CD4-positive, alpha-beta memory T cell (primary cell): ENCODE measurements at regions of chr15 and their contacts with region 1.

Region 1: GRCh38 chr15:63945007-63945788 is 101.1 kb downstream of the DAPK2 start:
- DNase-seq: peak; percentile 50 to 66 (median 56)
- H3K4me3 ChIP-seq: no peak overlapping the region
- H3K4me3 Mint-ChIP-seq: peak overlapping the region in 3 of 8 donors; percentile 4 to 57 (median 14)
- H3K27ac ChIP-seq: no peak overlapping the region
- H3K27ac Mint-ChIP-seq: peak overlapping the region in 5 of 7 donors; percentile 30 to 85 (median 61)
- H3K4me1 ChIP-seq: peaks cover 9% of the 10 kb centered on the region
- H3K4me1 Mint-ChIP-seq: peaks cover 6 to 20% (median 10%) of the 10 kb centered on the region in 4 donors
- H3K27me3 ChIP-seq: no peaks in the 10 kb centered on the region
- H3K27me3 Mint-ChIP-seq: no peaks in the 10 kb centered on the region

Region 2: GRCh38 chr15:63600616-63601025 is 344.6 kb before region 1 on chr15:
- CTCF ChIA-PET with region 1: no interaction called
- POLR2A ChIA-PET with region 1: no interaction called
- intact Hi-C with region 1: no loop called
- DNase-seq: peak; percentile 90 to 95 (median 93)
- H3K4me3 ChIP-seq: peak overlapping the region; percentile 19 to 70
- H3K4me3 Mint-ChIP-seq: peak overlapping the region; percentile 92 to 98 (median 95)
- H3K27ac ChIP-seq: peak overlapping the region; percentile 69
- H3K27ac Mint-ChIP-seq: peak overlapping the region; percentile 94 to 97 (median 96)
- H3K4me1 ChIP-seq: peaks cover 39% of the 10 kb centered on the region
- H3K4me1 Mint-ChIP-seq: peaks cover 26 to 84% (median 47%) of the 10 kb centered on the region in 4 donors
- H3K27me3 ChIP-seq: no peaks in the 10 kb centered on the region
- H3K27me3 Mint-ChIP-seq: no peaks in the 10 kb centered on the region

Region 3: DNA sequence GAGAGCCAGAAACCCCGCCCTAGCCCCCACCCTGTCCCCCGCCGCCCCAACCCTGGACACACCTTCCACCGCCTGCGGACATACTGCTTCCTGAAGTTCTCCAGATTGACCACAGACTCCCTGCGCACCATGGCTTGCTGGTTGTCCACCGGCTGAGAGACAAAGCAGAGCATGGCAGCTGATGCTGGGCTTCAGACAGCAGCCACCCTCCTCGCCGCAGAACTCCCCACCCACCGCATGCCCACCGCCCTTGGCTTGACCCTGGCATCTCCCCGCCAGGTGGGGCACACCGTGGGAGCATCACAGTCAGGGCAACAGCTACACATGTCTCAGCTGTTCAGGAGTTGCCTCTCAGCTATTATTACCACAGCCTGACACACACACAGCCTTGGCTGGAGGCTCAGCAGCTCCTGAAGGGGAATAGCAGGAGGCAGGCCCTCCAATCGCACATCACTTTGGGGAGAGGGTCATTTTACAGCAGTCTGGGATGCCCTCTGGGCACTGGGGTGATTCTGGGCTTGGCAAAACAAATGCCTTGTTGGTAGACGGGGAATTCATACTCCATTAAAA is 33.1 kb before region 1 on chr15:
- CTCF ChIA-PET with region 1: interaction called, 10 read pairs
- POLR2A ChIA-PET with region 1: interaction called, 3 read pairs
- intact Hi-C with region 1: no loop called
- DNase-seq: no peak
- H3K4me3 ChIP-seq: no peak overlapping the region
- H3K4me3 Mint-ChIP-seq: no peak overlapping the region
- H3K27ac ChIP-seq: no peak overlapping the region
- H3K27ac Mint-ChIP-seq: no peak overlapping the region
- H3K4me1 ChIP-seq: peaks cover under 1% of the 10 kb centered on the region
- H3K4me1 Mint-ChIP-seq: peaks cover 0 to 1% (median under 1%) of the 10 kb centered on the region in 4 donors
- H3K27me3 ChIP-seq: no peaks in the 10 kb centered on the region
- H3K27me3 Mint-ChIP-seq: no peaks in the 10 kb centered on the region

Region 4: GRCh38 chr15:63933522-63933921 is 11.7 kb before region 1 on chr15:
- CTCF ChIA-PET with region 1: interaction called, 20 read pairs
- POLR2A ChIA-PET with region 1: no interaction called
- intact Hi-C with region 1: no loop called
- DNase-seq: no peak
- H3K4me3 ChIP-seq: no peak overlapping the region
- H3K4me3 Mint-ChIP-seq: no peak overlapping the region
- H3K27ac ChIP-seq: no peak overlapping the region
- H3K27ac Mint-ChIP-seq: no peak overlapping the region
- H3K4me1 ChIP-seq: peaks cover 15% of the 10 kb centered on the region
- H3K4me1 Mint-ChIP-seq: peaks cover 11 to 22% (median 14%) of the 10 kb centered on the region in 4 donors
- H3K27me3 ChIP-seq: no peaks in the 10 kb centered on the region
- H3K27me3 Mint-ChIP-seq: no peaks in the 10 kb centered on the region

Region 5: GRCh38 chr15:63970621-63971426 is 25.6 kb after region 1 on chr15:
- CTCF ChIA-PET with region 1: interaction called, 26 read pairs
- POLR2A ChIA-PET with region 1: interaction called, 7 read pairs
- intact Hi-C with region 1: no loop called
- DNase-seq: peak; percentile 7 to 58 (median 19)
- H3K4me3 ChIP-seq: peak overlapping the region in 1 of 2 donors; percentile 4
- H3K4me3 Mint-ChIP-seq: peak overlapping the region; percentile 8 to 91 (median 78)
- H3K27ac ChIP-seq: peak overlapping the region; percentile 34
- H3K27ac Mint-ChIP-seq: peak overlapping the region; percentile 84 to 99 (median 95)
- H3K4me1 ChIP-seq: peaks cover 37% of the 10 kb centered on the region
- H3K4me1 Mint-ChIP-seq: peaks cover 22 to 50% (median 33%) of the 10 kb centered on the region in 4 donors
- H3K27me3 ChIP-seq: no peaks in the 10 kb centered on the region
- H3K27me3 Mint-ChIP-seq: no peaks in the 10 kb centered on the region

Region 6: DNA sequence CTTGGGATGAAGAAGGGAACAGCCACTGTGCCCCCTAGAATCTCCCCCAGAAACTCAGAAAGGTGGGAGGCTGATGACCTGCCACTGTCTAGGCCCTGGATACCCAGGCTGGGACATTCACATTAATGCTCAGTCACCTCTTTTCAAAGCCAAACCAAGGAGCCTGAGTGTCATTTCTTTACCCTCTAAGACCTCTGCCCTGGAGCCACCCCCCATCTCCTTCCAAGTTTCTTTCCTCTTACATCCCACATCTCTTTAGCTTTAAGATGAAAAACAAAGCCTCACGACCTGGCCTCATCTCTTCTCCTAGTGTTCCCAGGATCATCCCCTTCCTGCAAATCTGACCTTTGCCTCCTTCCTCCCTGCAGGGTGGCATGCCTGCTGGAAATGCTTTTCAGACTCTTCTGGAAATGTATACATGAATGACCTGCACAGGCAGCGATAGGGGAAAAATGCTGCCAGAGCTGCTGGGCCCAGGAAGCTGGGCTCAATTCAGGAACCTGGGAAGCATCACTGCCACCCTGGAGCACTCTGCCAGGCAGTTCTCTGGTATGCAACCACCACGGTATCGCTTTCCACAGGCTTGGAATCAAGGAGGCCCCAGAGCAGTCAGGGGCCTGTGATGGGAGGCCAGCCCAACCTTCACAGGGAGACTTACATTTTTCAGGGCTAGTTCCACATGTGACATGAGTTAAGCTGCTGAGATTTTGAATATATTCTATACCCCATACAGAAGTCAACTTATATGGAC is 33.5 kb after region 1 on chr15:
- CTCF ChIA-PET with region 1: interaction called, 12 read pairs
- POLR2A ChIA-PET with region 1: no interaction called
- intact Hi-C with region 1: no loop called
- DNase-seq: no peak
- H3K4me3 ChIP-seq: no peak overlapping the region
- H3K4me3 Mint-ChIP-seq: no peak overlapping the region
- H3K27ac ChIP-seq: no peak overlapping the region
- H3K27ac Mint-ChIP-seq: peak overlapping the region in 1 of 7 donors; percentile 37
- H3K4me1 ChIP-seq: no peaks in the 10 kb centered on the region
- H3K4me1 Mint-ChIP-seq: no peaks in the 10 kb centered on the region
- H3K27me3 ChIP-seq: no peaks in the 10 kb centered on the region
- H3K27me3 Mint-ChIP-seq: peaks cover 0 to 1% of the 10 kb centered on the region in 2 donors

Region 7: GRCh38 chr15:64038878-64039610 is 93.8 kb after region 1 on chr15:
- CTCF ChIA-PET with region 1: interaction called, 42 read pairs
- POLR2A ChIA-PET with region 1: no interaction called
- intact Hi-C with region 1: no loop called
- DNase-seq: no peak
- H3K4me3 ChIP-seq: no peak overlapping the region
- H3K4me3 Mint-ChIP-seq: no peak overlapping the region
- H3K27ac ChIP-seq: no peak overlapping the region
- H3K27ac Mint-ChIP-seq: no peak overlapping the region
- H3K4me1 ChIP-seq: no peaks in the 10 kb centered on the region
- H3K4me1 Mint-ChIP-seq: no peaks in the 10 kb centered on the region
- H3K27me3 ChIP-seq: no peaks in the 10 kb centered on the region
- H3K27me3 Mint-ChIP-seq: no peaks in the 10 kb centered on the region

Region 8: GRCh38 chr15:64046347-64047153 is 101.4 kb after region 1 on chr15 and contains the start of gene DAPK2:
- CTCF ChIA-PET with region 1: interaction called, 42 read pairs
- POLR2A ChIA-PET with region 1: interaction called, 4 read pairs
- intact Hi-C with region 1: loop called (anchors 1 kb)
- DNase-seq: peak; percentile 60 to 76 (median 64)
- H3K4me3 ChIP-seq: peak within 1 kb of the TSS; percentile 43 to 51
- H3K4me3 Mint-ChIP-seq: peak within 1 kb of the TSS; percentile 75 to 91 (median 78)
- H3K27ac ChIP-seq: no peak within 1 kb of the TSS
- H3K27ac Mint-ChIP-seq: peak within 1 kb of the TSS in 6 of 7 donors; percentile 13 to 87 (median 72)
- H3K4me1 ChIP-seq: peaks cover 12% of the 10 kb centered on the region
- H3K4me1 Mint-ChIP-seq: peaks cover 4 to 10% (median 5%) of the 10 kb centered on the region in 4 donors
- H3K27me3 ChIP-seq: no peaks in the 10 kb centered on the region
- H3K27me3 Mint-ChIP-seq: peaks cover 6 to 8% of the 10 kb centered on the region in 2 donors
- total RNA-seq, gene DAPK2: 2.3 to 2.9 TPM